Activated T-helper 1 cell treated with anti-CD3 and anti-CD28 coated beads, Interleukin-12 subunit alpha, Interleukin-12 subunit beta, Interleukin-2, Interleukin-4 antibody, amounts not matched to agents 30 ng/mL and 10 ng/mL and 1 ng/mL, durations not matched to agents 14 hours and 24 hours and 36 hours (primary cell): ENCODE measurements at regions of chr2 and their contacts with region 1.

Region 1: DNA sequence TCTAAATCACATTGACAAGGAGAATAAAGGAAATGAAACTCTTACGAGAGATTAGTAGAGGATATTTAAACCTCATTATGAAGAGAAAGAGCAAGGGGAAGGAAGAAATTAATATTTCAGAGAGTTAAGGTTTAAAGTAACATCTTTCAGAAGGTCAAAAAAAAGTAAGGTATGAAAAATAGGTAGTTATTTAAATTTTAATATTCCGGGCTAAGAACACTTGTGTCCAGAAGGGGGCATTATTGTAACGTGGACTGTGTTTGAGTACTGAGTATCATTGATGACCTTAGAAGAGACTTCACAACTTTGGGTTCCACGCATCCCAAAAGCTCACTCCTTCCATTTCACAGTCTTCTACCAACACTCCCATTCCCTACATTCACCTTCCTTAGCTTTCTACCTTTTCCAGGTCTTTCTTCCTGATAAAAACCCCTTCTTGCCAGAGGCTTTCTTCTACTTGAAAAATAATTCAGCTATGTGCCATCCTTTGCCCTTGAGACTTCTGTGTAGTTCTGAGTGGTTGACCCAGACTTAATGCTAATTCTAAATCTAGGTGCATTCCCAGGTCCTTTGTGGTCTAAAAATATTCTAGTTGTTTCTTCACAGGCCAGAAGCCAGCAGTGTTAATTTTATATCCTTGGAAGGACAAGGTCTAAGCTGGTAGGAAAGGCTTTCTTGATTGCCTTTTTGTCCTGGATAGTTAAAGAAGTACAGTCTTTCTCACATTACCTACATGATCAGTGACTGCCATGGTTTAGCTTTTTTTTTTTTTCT is 16.5 kb downstream of the DYNC1I2 start:
- DNase-seq: no peak
- H3K4me3 Mint-ChIP-seq: no peak overlapping the region
- H3K27ac Mint-ChIP-seq: no peak overlapping the region
- H3K4me1 Mint-ChIP-seq: peaks cover 12% of the 10 kb centered on the region
- H3K27me3 Mint-ChIP-seq: no peaks in the 10 kb centered on the region

Region 2: DNA sequence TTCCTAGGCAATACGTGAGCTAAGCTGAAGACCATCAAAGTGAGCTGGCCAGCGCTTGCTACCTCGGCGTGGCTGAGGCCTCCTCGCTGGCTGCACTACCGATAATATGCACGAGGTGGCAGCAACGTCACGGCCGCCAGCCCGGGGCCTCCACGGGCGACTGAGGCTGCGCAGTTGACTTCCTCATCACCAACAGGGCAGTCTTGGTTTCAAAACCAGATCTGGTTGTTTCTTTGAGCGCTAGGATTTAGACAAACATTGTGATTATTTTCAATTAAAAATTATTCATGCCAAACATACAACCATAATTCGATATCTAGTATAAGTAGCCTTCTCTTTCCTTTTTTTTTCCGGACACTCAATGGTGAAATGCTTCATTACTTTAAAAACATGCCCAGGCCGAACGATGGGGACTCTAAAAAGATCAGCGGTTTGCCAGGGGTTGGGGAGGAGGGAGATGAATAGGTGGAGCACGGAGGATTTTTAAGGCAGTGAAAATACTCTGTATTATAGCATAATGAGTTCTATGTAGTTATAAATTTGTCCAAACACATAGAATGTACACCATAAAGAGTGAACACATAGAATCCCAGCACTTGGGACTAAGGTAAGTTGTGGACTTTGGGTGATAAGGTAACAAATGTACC is 129.5 kb before region 1 on chr2:
- intact Hi-C with region 1: loop called (anchors 5 kb)
- DNase-seq: peak; percentile 73
- H3K4me3 Mint-ChIP-seq: no peak overlapping the region
- H3K27ac Mint-ChIP-seq: no peak overlapping the region
- H3K4me1 Mint-ChIP-seq: no peaks in the 10 kb centered on the region
- H3K27me3 Mint-ChIP-seq: peaks cover 9% of the 10 kb centered on the region

Region 3: GRCh38 chr2:171615069-171615468 is 88.7 kb before region 1 on chr2:
- intact Hi-C with region 1: no loop called
- DNase-seq: no peak
- H3K4me3 Mint-ChIP-seq: no peak overlapping the region
- H3K27ac Mint-ChIP-seq: no peak overlapping the region
- H3K4me1 Mint-ChIP-seq: no peaks in the 10 kb centered on the region
- H3K27me3 Mint-ChIP-seq: peaks cover 7% of the 10 kb centered on the region

Region 4: DNA sequence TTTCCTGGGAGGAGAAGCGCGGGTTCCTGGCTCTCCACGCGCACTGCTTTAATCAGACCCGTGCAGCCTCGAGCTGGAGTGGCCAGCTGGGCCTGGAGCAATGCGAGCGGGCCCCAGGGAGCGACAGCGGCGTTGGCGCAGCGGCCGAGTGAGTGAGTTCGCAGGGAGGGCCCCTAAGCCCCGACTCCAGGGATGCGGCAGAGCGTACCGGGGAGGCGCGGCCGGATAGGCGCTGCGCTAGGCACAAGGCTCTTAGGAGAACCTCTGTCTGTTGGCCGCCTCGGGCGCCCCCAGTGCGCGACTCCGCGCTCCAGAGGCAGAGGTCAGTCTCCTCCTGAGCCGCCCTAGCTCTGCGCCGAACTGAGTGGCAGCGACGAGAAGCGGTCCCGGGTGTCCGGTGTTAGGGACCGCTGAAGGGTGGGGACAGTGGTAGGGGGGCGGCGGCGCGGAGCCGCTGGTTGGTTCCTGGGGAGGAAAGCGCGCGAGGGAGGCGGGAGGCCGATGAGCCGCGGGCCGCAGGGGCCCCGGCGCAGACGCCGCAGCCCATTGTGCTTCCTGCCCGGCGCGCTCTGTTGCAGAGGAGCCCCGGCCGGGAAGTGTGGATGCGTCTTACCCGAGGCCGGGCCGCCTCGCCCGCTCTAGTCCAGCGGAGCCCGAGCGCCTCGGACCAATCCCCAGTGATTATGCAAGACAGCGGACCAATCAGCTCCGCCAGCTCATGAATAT is 381.1 kb after region 1 on chr2:
- intact Hi-C with region 1: loop called (anchors 5 kb)
- DNase-seq: no peak
- H3K4me3 Mint-ChIP-seq: peak overlapping the region; percentile 67
- H3K27ac Mint-ChIP-seq: peak overlapping the region; percentile 75
- H3K4me1 Mint-ChIP-seq: peaks cover 49% of the 10 kb centered on the region
- H3K27me3 Mint-ChIP-seq: peaks cover 89% of the 10 kb centered on the region

Region 5: DNA sequence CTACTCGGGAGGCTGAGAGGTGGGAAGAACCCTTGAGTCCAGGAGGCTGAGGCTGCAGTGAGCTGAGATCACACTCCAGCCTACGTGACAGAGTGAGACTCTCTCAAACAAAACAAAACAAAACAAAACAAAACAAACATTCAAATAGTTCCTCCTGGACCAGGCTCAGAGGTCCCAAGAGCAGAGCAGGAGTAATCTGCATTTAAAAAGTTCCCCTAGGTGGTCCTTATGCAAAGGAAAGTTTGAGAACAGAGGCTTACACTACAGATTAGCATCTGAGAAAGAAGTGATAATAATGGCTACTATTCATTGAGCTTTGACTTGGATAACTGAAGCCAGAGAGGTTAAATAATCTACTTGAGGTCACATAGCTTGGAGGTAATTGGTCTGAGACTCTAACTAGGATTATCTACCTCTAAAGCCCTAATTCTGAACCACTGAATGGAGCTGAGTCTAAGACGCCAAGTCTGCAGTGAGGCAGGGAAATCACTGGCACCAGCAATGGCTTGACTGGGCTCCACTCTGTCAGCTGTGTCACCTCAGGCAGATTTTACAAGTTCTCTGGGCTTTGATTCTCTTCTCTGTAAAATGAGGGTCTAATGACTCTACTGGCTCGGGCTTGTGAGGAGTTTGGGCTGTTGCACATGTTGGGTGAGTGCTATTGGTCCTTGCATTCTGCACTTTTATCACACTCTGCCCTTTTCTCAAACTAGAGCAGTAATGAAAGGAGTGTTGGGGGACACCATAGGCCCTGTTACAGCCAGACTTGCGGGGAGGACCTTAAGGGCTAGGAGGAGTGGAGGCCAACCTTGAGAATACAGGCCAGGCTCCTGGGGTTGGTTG is 428.2 kb after region 1 on chr2:
- intact Hi-C with region 1: loop called (anchors 1 kb)
- DNase-seq: no peak
- H3K4me3 Mint-ChIP-seq: no peak overlapping the region
- H3K27ac Mint-ChIP-seq: no peak overlapping the region
- H3K4me1 Mint-ChIP-seq: no peaks in the 10 kb centered on the region
- H3K27me3 Mint-ChIP-seq: peaks cover 32% of the 10 kb centered on the region